HEK293 (cell line): ENCODE measurements at regions of chr11 and their contacts with region 1.

Region 1: DNA sequence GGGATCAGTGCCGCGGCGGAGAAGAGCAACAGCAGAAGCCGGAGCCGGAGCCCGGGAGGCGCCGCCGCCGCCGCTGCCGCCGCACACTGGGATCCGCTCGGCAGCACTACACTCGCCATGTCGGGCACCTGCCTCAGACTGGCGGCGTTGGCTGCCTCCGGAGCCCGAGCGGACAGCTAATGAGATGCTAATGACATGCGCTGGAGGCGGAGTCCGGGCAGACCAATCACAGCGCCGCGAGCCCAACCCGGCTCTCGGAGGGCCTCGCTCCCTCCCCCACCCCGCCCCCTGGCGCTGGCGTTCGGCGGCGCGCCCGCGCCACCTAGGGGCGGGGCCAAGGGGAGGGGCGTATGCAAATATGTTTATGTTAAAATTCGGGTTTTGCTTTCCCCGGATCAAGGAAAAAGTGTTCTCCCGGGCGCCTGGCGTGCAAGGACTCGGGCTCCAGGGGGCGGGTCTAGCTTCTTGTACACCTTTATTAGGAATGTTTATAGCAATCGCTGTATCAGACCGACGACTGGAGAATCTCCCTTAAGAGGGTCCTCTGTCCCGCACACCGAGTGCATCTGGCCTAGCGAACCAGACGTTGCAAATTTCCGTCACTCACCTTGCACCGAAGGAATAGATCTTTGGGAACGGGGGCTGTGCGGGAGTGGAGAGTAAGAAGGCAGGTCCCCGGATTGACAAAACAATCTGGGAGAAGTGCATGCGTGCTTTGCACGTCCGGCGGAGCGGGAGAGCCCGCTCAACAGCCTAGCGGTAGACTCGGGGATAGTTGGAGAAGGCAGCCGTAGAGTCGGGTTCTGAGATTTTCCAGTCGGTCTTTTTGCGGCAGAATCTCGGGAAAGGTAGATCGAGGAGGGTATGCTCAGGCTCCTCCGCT is at the start of gene CADM1:
- H3K4me3 ChIP-seq: peak within 1 kb of the TSS; percentile 69
- H3K27ac ChIP-seq: peak within 1 kb of the TSS; percentile 92
- H3K4me1 ChIP-seq: no peaks in the 10 kb centered on the region
- CTCF ChIP-seq: peak; percentile 58; the same call in 1 of the 2 replicates

Region 2: DNA sequence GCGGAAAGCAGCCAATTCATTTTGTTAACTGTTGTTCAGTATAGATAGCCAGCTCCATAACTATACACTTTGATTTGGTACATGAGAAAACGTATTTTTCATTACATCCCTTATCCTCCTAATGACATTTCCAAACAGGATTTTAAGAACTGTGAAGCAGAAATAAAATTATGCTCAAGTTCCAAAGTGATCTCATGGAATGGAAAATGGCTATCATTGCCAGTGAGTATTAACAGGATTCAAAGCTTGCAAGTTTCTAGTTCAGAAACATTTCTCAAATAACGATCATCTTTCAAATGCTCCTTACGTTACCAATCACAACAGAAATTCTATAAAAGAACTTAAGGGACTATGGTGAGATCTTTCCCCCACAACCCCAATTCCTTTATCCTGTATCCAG is 54.0 kb before region 1 on chr11:
- CTCF ChIA-PET with region 1: no interaction called
- POLR2A ChIA-PET with region 1: interaction called, 10 read pairs
- H3K4me3 ChIP-seq: no peak overlapping the region
- H3K27ac ChIP-seq: no peak overlapping the region
- H3K4me1 ChIP-seq: no peaks in the 10 kb centered on the region; the same call in none of the 2 replicates
- CTCF ChIP-seq: no peak

Region 3: DNA sequence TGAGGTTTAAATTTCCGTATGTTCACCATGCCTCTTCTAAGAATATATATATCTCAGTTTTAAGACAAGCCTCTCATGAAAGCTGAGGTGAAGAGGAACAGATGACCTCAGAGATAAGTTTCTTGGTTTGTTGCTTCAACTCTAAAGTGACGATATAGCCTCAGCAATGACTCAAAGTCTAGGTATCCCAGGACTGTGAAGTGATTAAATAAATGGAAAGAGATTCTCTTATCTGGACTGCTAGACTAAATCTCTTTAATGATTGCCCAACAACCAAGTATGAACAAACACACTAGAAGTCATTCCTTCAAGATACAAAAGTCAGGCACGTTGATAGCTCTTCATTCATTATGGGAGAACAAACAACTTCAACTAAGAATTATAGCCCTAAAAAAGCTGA is 15.6 kb before region 1 on chr11:
- CTCF ChIA-PET with region 1: interaction called, 6 read pairs
- POLR2A ChIA-PET with region 1: interaction called, 13 read pairs
- H3K4me3 ChIP-seq: no peak overlapping the region
- H3K27ac ChIP-seq: no peak overlapping the region
- H3K4me1 ChIP-seq: no peaks in the 10 kb centered on the region
- CTCF ChIP-seq: no peak

Region 4: GRCh38 chr11:115581871-115582639 is 77.5 kb after region 1 on chr11:
- CTCF ChIA-PET with region 1: interaction called, 5 read pairs
- POLR2A ChIA-PET with region 1: interaction called, 10 read pairs
- H3K4me3 ChIP-seq: no peak overlapping the region
- H3K27ac ChIP-seq: peak overlapping the region; percentile 76
- H3K4me1 ChIP-seq: 0 out of 2 replicates have a peak, but pooled peaks cover 3% of the 10 kb centered on the region
- CTCF ChIP-seq: peak; percentile 39; the same call in 1 of the 2 replicates